ENCODE measurements at regions of chr6 and their contacts with region 1.

Region 1: GRCh38 chr6:84220809-84221409 is 6.5 kb downstream of the CEP162 start:
- DNase-seq: peak; percentile 55
- H3K4me3 ChIP-seq: no peak overlapping the region
- H3K27ac ChIP-seq: no peak overlapping the region
- H3K4me1 ChIP-seq: no peaks in the 10 kb centered on the region
- H3K27me3 ChIP-seq: no peaks in the 10 kb centered on the region
- CTCF ChIP-seq: peak in 1 of 2 donors; percentile 12
- POLR2A ChIP-seq: no peak

Region 2: DNA sequence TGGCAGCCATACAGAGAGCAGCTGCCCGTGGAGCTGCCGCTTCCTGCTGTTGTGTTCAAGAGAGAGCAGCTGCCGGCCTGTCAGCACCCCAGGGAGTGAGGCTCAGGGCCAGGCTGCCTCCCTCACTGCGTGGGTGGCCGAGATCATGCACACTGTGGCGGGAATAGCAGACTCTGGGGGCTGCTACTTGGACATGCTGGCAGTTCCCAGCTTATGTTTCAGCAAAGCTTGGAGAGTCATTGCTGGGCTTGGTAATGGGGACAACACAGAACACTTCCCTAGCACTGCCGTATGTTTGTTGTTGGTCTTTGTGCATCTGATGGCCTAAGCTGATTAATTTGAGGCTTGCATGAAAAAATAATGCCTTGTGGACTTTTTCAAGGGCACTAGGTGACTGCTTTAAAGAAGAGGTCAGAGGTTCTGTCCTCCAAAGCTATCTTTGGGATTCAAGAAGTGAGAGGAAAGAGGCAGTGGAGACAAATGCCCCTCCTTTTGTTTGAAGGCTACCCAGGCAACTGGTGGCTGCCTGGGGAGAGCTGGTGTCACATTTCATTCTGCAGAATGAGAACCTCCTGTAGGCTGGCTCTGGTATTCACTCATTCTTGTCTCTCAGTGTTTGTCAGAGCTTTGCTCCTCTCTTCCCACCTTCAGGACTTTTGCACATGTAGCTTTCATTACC is 168.6 kb before region 1 on chr6:
- CTCF ChIA-PET with region 1: no interaction called
- POLR2A ChIA-PET with region 1: no interaction called
- dilution Hi-C with region 1: no loop called
- intact Hi-C with region 1: loop called (anchors 10 kb)
- DNase-seq: peak; percentile 70
- H3K4me3 ChIP-seq: no peak overlapping the region
- H3K27ac ChIP-seq: no peak overlapping the region
- H3K4me1 ChIP-seq: peaks cover 13% of the 10 kb centered on the region
- H3K27me3 ChIP-seq: peaks cover 0 to 2% of the 10 kb centered on the region in 2 experiments
- CTCF ChIP-seq: peak in 1 of 2 donors; percentile 8
- POLR2A ChIP-seq: no peak

Region 3: DNA sequence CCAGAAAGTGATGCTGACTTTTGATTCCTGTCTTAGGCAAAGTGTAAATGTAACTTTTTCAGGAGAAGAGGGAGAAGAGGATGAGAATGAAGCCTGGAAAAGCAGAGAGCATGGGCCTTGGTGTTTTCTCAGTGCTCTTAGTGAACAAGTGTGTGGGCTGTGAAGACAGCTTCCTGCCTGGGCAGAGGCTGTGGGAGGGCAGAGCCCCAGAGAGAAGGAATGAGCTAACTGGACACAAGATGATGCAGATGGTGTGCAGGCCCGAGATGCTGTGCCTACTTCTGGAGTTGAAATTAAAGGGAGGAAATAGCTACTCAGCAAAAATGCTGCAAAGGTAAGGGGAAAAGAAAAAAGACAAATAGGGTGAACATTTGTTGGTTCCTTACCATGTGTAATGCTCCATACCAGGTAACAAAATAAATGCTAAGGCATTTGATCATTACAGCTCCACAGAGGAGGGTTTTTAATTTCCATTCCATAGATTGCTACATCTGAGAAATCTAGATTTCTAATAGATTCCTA is 93.5 kb after region 1 on chr6:
- CTCF ChIA-PET with region 1: no interaction called
- POLR2A ChIA-PET with region 1: no interaction called
- dilution Hi-C with region 1: no loop called
- intact Hi-C with region 1: no loop called
- DNase-seq: no peak
- H3K4me3 ChIP-seq: no peak overlapping the region
- H3K27ac ChIP-seq: no peak overlapping the region
- H3K4me1 ChIP-seq: no peaks in the 10 kb centered on the region
- H3K27me3 ChIP-seq: no peaks in the 10 kb centered on the region
- CTCF ChIP-seq: no peak
- POLR2A ChIP-seq: no peak

Region 4: DNA sequence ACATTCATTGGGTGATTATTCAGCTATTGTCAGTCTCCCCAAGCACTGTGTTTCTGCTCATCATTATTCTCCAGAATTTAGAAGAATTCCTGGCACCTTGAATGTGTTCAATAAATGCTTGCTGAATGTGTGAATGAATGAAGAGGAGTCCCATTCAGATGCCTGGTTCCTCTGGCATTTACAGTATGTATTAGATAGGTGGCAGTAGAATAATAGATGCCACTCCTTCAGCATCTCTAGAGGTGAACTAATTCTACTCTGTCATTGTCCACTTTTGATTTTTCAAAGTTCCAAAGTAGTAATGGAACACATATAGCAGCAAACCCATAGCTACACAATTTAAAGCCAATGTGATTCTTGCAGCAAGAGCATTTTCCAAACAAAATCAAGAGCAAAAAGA is 125.5 kb after region 1 on chr6:
- CTCF ChIA-PET with region 1: no interaction called
- POLR2A ChIA-PET with region 1: no interaction called
- dilution Hi-C with region 1: no loop called
- intact Hi-C with region 1: no loop called
- DNase-seq: peak; percentile 4
- H3K4me3 ChIP-seq: no peak overlapping the region
- H3K27ac ChIP-seq: no peak overlapping the region
- H3K4me1 ChIP-seq: no peaks in the 10 kb centered on the region
- H3K27me3 ChIP-seq: peaks cover 5 to 7% of the 10 kb centered on the region in 2 experiments
- CTCF ChIP-seq: no peak
- POLR2A ChIP-seq: no peak